ENCODE measurements at regions of chr2 and their contacts with region 1.

Region 1: GRCh38 chr2:183564726-183565125 is 440.5 kb downstream of the NUP35 start:
- DNase-seq: no peak
- ATAC-seq: no peak
- H3K4me3 ChIP-seq: no peak overlapping the region
- H3K27ac ChIP-seq: no peak overlapping the region
- H3K4me1 ChIP-seq: no peaks in the 10 kb centered on the region
- H3K27me3 ChIP-seq: no peaks in the 10 kb centered on the region
- CTCF ChIP-seq: no peak
- EP300 ChIP-seq: no peak
- POLR2A ChIP-seq: no peak
- RAD21 ChIP-seq: no peak

Region 2: DNA sequence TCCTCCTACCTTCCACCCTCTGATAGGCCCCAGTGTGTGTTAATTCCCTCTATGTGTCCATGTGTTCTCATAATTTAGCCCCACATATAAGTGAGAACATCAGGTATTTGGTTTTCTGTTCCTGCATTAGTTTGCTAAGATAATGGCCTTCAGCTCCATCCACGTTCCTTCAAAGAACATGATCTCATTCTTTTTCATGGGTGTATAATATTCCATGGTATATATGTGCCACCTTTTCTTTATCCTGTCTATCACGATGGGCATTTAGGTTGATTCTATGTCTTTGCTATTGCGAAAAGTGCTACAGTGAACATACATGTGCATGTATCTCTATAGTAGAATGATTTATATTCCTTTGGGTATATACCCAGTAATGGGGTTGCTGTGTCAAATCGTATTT is 1091.1 kb before region 1 on chr2:
- CTCF ChIA-PET with region 1: no interaction called
- POLR2A ChIA-PET with region 1: no interaction called
- in situ Hi-C with region 1: no loop called
- intact Hi-C with region 1: loop called (anchors 5 kb)
- DNase-seq: no peak
- ATAC-seq: no peak
- H3K4me3 ChIP-seq: no peak overlapping the region
- H3K27ac ChIP-seq: no peak overlapping the region
- H3K4me1 ChIP-seq: no peaks in the 10 kb centered on the region
- H3K27me3 ChIP-seq: no peaks in the 10 kb centered on the region
- CTCF ChIP-seq: no peak
- EP300 ChIP-seq: no peak
- POLR2A ChIP-seq: no peak
- RAD21 ChIP-seq: no peak

Region 3: GRCh38 chr2:183543731-183544130 is 21.0 kb before region 1 on chr2:
- CTCF ChIA-PET with region 1: no interaction called
- POLR2A ChIA-PET with region 1: no interaction called
- in situ Hi-C with region 1: no loop called
- intact Hi-C with region 1: no loop called
- DNase-seq: no peak
- ATAC-seq: no peak
- H3K4me3 ChIP-seq: no peak overlapping the region
- H3K27ac ChIP-seq: no peak overlapping the region
- H3K4me1 ChIP-seq: no peaks in the 10 kb centered on the region
- H3K27me3 ChIP-seq: no peaks in the 10 kb centered on the region
- CTCF ChIP-seq: no peak
- EP300 ChIP-seq: no peak
- POLR2A ChIP-seq: no peak
- RAD21 ChIP-seq: no peak

Measured in K562 (cell line).